ENCODE measurements at regions of chr2 and their contacts with region 1.

Region 1: DNA sequence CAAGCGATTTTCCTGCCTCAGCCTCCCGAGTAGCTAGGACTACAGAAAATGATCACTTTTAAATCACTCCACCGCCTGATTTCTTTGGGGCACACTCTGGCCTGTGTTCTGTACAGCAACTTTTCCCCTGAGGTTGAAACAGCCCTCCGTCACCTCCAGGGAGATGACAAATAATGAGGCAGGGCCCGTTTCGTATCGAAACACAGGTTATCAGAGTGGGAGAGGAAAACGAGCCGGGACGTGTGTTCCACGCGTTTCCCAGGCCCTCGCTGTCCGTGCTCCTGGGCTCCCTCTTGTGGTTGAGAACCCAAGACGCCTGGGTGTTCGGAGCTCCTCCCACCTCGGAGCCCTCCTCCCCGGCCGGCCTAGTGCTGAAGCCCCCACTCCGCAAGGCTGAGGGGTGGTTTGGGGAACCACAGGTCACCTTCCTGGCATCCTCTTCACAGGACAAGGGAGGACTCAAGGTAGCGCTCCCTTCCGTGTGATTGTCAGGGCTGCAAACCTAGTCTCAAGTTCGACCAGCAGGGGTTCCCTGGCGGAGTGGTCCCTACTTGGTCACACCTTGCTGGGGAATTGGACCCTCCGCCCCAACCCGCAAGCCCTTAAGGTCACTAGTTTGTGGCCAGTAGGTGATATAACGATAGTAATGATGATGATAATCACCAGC is 12.8 kb downstream of the ATP6V1B1 start:
- DNase-seq: peak; percentile 81
- ATAC-seq: peak; percentile 97
- H3K4me3 Mint-ChIP-seq: peak overlapping the region; percentile 58
- H3K27ac Mint-ChIP-seq: no peak overlapping the region
- H3K4me1 Mint-ChIP-seq: peaks cover 17% of the 10 kb centered on the region
- H3K27me3 Mint-ChIP-seq: peaks cover 33% of the 10 kb centered on the region

Region 2: GRCh38 chr2:70301344-70302194 is 646.9 kb before region 1 on chr2 and contains the start of gene FAM136A:
- CTCF ChIA-PET with region 1: interaction called, 12 read pairs
- DNase-seq: peak; percentile 91
- ATAC-seq: peak; percentile 90
- H3K4me3 Mint-ChIP-seq: peak within 1 kb of the TSS; percentile 86
- H3K27ac Mint-ChIP-seq: peak within 1 kb of the TSS; percentile 95
- H3K4me1 Mint-ChIP-seq: peaks cover 38% of the 10 kb centered on the region
- H3K27me3 Mint-ChIP-seq: no peaks in the 10 kb centered on the region
- total RNA-seq, gene FAM136A: 39.7 to 50.2 TPM

Region 3: GRCh38 chr2:70789304-70790135 is 158.9 kb before region 1 on chr2:
- CTCF ChIA-PET with region 1: interaction called, 27 read pairs
- DNase-seq: peak; percentile 78
- ATAC-seq: peak; percentile 82
- H3K4me3 Mint-ChIP-seq: peak overlapping the region; percentile 56
- H3K27ac Mint-ChIP-seq: no peak overlapping the region
- H3K4me1 Mint-ChIP-seq: peaks cover 7% of the 10 kb centered on the region
- H3K27me3 Mint-ChIP-seq: peaks cover 70% of the 10 kb centered on the region

Region 4: DNA sequence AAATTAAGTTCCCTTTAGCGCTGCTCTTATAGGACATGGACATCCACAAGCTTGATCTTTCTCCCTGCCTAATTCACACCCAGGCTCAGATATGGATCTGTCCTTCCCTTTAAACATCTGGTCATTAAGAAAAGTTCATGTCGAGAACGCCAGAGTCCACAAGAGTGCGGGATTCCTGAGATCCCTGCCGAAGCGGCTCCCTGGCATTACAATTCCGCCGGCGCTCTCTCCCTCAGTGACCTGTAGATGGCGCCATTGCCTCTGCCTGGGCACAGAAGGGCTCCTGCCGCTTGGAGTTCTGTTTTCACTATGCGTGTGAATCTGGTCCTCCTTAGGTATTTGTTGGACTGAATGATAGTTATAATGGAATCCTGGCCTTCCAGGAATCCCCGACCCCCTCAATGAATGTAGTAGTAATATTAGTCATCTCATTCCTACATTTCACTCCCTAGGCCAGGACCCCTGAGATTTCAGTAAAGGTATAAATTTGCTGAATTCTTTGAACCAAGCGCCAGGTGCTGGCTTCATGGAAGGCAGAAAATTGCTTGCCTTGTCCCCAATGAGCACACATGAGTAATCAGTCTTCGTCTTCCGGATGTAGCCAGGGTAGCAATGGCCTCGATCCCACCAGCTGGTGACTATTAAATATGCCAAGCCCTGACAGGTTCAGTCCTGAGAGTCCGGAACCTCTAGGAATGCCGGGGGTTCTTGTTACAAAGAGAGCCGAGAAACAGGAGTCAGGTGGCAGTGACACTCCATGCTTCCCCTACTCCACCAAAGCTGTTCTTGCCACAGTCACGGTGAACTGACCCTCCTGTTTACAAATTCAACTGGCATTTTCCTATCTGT is 86.5 kb before region 1 on chr2:
- CTCF ChIA-PET with region 1: interaction called, 84 read pairs
- DNase-seq: peak; percentile 76
- ATAC-seq: peak; percentile 73
- H3K4me3 Mint-ChIP-seq: no peak overlapping the region
- H3K27ac Mint-ChIP-seq: no peak overlapping the region
- H3K4me1 Mint-ChIP-seq: peaks cover 5% of the 10 kb centered on the region
- H3K27me3 Mint-ChIP-seq: peaks cover 62% of the 10 kb centered on the region

Region 5: GRCh38 chr2:70919672-70920366 is 28.7 kb before region 1 on chr2:
- CTCF ChIA-PET with region 1: interaction called, 15 read pairs
- DNase-seq: peak; percentile 79
- ATAC-seq: peak; percentile 51
- H3K4me3 Mint-ChIP-seq: no peak overlapping the region
- H3K27ac Mint-ChIP-seq: no peak overlapping the region
- H3K4me1 Mint-ChIP-seq: no peaks in the 10 kb centered on the region
- H3K27me3 Mint-ChIP-seq: peaks cover 18% of the 10 kb centered on the region

Region 6: GRCh38 chr2:70936979-70937811 is 11.3 kb before region 1 on chr2:
- CTCF ChIA-PET with region 1: interaction called, 19 read pairs
- DNase-seq: no peak
- ATAC-seq: no peak
- H3K4me3 Mint-ChIP-seq: no peak overlapping the region
- H3K27ac Mint-ChIP-seq: no peak overlapping the region
- H3K4me1 Mint-ChIP-seq: no peaks in the 10 kb centered on the region
- H3K27me3 Mint-ChIP-seq: peaks cover 27% of the 10 kb centered on the region

Region 7: DNA sequence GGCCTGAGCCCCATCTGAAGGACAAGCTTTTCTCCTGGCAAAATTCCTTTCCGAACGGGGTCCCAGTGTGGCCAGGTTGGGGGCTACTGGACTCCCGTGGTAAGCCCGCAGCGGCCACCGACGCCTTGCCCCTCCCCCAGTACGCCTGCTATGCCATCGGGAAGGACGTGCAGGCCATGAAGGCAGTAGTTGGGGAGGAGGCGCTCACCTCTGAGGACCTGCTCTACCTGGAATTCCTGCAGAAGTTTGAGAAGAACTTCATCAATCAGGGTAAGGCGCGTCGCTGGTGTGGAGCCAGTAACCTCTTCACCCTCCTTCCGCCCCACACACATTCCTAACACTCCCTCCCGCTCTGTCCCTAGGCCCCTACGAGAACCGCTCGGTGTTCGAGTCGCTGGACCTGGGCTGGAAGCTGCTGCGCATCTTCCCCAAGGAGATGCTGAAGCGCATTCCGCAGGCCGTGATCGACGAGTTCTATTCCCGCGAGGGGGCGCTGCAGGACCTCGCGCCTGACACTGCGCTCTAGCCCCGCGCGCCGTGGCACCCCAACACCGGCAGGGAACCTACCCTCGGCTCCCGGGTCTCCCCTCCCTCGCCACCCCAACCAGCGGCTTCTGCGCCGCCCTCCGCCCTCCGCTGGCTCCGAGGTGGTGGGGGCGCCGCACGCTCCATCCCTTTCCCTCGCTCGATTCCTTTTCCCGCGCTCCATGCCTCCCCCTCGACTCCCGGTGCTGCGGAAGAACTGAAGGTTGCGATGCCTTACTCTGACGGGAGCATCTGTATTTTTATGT is 16.3 kb after region 1 on chr2:
- CTCF ChIA-PET with region 1: interaction called, 56 read pairs
- DNase-seq: peak; percentile 86
- ATAC-seq: peak; percentile 98
- H3K4me3 Mint-ChIP-seq: peak overlapping the region; percentile 83
- H3K27ac Mint-ChIP-seq: no peak overlapping the region
- H3K4me1 Mint-ChIP-seq: peaks cover 8% of the 10 kb centered on the region
- H3K27me3 Mint-ChIP-seq: peaks cover 39% of the 10 kb centered on the region